T-cell (primary cell): ENCODE measurements at regions of chr10 and their contacts with region 1.

Region 1: DNA sequence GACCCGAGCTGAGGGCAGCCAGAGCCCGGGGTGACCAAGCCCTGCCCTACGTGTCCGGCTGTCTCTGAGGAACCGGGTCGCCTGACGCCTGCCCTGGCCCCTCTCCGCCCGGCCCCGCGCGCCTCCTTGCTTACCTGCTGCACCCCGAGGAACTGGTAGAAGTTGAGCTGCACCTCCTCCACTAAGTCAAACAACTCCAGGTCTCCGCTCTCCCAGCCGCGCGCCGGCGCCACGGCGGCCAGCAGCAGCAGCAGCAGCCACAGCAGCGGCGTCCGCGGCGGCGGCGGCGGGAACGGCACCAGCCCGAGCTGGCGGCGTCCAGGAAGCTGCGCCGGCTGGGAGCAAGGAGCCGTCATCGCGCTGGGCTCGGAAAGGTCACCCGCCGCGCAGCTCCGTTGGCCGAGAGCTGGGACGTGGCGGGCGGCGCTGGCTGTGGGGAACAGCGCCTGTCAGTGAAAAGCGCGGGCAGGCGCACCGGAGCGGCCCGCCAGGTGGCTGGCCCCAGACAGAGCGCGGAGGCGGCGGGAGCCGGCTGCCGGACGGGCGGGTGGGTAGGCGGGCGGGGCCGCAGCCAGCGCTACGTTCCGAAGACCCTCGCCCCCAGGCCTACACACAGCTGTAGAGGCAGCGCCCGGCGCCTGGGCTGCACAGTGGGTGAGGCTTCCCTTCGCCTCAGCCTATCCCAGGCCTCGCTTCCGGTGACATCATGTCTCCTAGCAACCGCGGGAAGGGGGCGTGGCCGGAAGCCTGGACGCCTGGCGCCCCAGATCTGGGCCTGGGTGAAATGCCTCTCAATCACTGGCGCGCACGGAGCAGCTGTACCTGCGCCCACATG is at the start of gene DNAJC1:
- DNase-seq: peak; percentile 92 to 100 (median 97)
- ATAC-seq: peak; percentile 93 to 95 (median 94)
- H3K4me3 ChIP-seq: peak within 1 kb of the TSS; percentile 91 to 94
- H3K4me3 Mint-ChIP-seq: peak within 1 kb of the TSS; percentile 88 to 95 (median 94)
- H3K27ac ChIP-seq: peak within 1 kb of the TSS; percentile 89
- H3K27ac Mint-ChIP-seq: peak within 1 kb of the TSS; percentile 89 to 94
- H3K4me1 ChIP-seq: peaks cover 8 to 13% of the 10 kb centered on the region in 2 experiments
- H3K4me1 Mint-ChIP-seq: peaks cover 45 to 57% (median 50%) of the 10 kb centered on the region in 3 donors
- H3K27me3 ChIP-seq: peaks cover 0 to 3% of the 10 kb centered on the region in 2 experiments
- H3K27me3 Mint-ChIP-seq: peaks cover 0 to 1% of the 10 kb centered on the region in 2 donors
- total RNA-seq, gene DNAJC1: 12.8 to 23.1 (median 16.7) TPM

Region 2: GRCh38 chr10:22630234-22631174 is 627.2 kb after region 1 on chr10:
- CTCF ChIA-PET with region 1: no interaction called
- POLR2A ChIA-PET with region 1: interaction called, 3 to 10 read pairs
- DNase-seq: peak in 6 of 35 experiments; percentile 26 to 84 (median 42)
- ATAC-seq: peak; percentile 89 to 90 (median 90)
- H3K4me3 ChIP-seq: peak overlapping the region in 1 of 2 donors; percentile 37
- H3K4me3 Mint-ChIP-seq: peak overlapping the region; percentile 58 to 79 (median 76)
- H3K27ac ChIP-seq: peak overlapping the region; percentile 94
- H3K27ac Mint-ChIP-seq: peak overlapping the region; percentile 94 to 98
- H3K4me1 ChIP-seq: peaks cover 58 to 70% of the 10 kb centered on the region in 2 experiments
- H3K4me1 Mint-ChIP-seq: peaks cover 96 to 98% (median 97%) of the 10 kb centered on the region in 3 donors
- H3K27me3 ChIP-seq: no peaks in the 10 kb centered on the region
- H3K27me3 Mint-ChIP-seq: no peaks in the 10 kb centered on the region

Region 3: GRCh38 chr10:22682237-22683139 is 679.2 kb after region 1 on chr10:
- CTCF ChIA-PET with region 1: no interaction called
- POLR2A ChIA-PET with region 1: interaction called in 1 of 2 experiments, 10 read pairs
- DNase-seq: peak in 34 of 35 experiments; percentile 38 to 81 (median 58)
- ATAC-seq: peak; percentile 67 to 75 (median 68)
- H3K4me3 ChIP-seq: peak overlapping the region in 1 of 2 donors; percentile 54
- H3K4me3 Mint-ChIP-seq: peak overlapping the region; percentile 49 to 75 (median 65)
- H3K27ac ChIP-seq: peak overlapping the region; percentile 94
- H3K27ac Mint-ChIP-seq: peak overlapping the region; percentile 92 to 97
- H3K4me1 ChIP-seq: peaks cover 68 to 95% of the 10 kb centered on the region in 2 experiments
- H3K4me1 Mint-ChIP-seq: peaks cover 89 to 92% (median 90%) of the 10 kb centered on the region in 3 donors
- H3K27me3 ChIP-seq: no peaks in the 10 kb centered on the region
- H3K27me3 Mint-ChIP-seq: no peaks in the 10 kb centered on the region

Region 4: GRCh38 chr10:23063032-23063972 is 1060.0 kb after region 1 on chr10:
- CTCF ChIA-PET with region 1: interaction called in 1 of 2 experiments, 12 read pairs
- POLR2A ChIA-PET with region 1: no interaction called
- DNase-seq: no peak
- ATAC-seq: no peak
- H3K4me3 ChIP-seq: no peak overlapping the region
- H3K4me3 Mint-ChIP-seq: no peak overlapping the region
- H3K27ac ChIP-seq: no peak overlapping the region
- H3K27ac Mint-ChIP-seq: no peak overlapping the region
- H3K4me1 ChIP-seq: peaks cover 0 to 4% of the 10 kb centered on the region in 2 experiments
- H3K4me1 Mint-ChIP-seq: peaks cover 2 to 5% (median 3%) of the 10 kb centered on the region in 3 donors
- H3K27me3 ChIP-seq: peaks cover 0 to 12% of the 10 kb centered on the region in 2 experiments
- H3K27me3 Mint-ChIP-seq: peaks cover 10 to 12% of the 10 kb centered on the region in 2 donors